ENCODE measurements at regions of chr17 and their contacts with region 1.

Region 1: GRCh38 chr17:2054512-2055291 is at the start of gene HIC1:
- DNase-seq: peak; percentile 84
- H3K4me3 ChIP-seq: peak within 1 kb of the TSS; percentile 66 to 81
- H3K27ac ChIP-seq: peak within 1 kb of the TSS; percentile 88 to 92
- H3K4me1 ChIP-seq: peaks cover 16% of the 10 kb centered on the region
- H3K27me3 ChIP-seq: no peaks in the 10 kb centered on the region
- CTCF ChIP-seq: peak; percentile 95 to 99 (median 96)
- POLR2A ChIP-seq: peak; percentile 16
- total RNA-seq, gene HIC1: 36.1 to 38.4 TPM

Region 2: GRCh38 chr17:2094891-2095535 is 40.3 kb after region 1 on chr17:
- intact Hi-C with region 1: no loop called
- DNase-seq: peak; percentile 58
- H3K4me3 ChIP-seq: no peak overlapping the region
- H3K27ac ChIP-seq: no peak overlapping the region
- H3K4me1 ChIP-seq: peaks cover 8% of the 10 kb centered on the region
- H3K27me3 ChIP-seq: no peaks in the 10 kb centered on the region
- CTCF ChIP-seq: peak; percentile 32 to 60 (median 42)
- POLR2A ChIP-seq: no peak

Region 3: DNA sequence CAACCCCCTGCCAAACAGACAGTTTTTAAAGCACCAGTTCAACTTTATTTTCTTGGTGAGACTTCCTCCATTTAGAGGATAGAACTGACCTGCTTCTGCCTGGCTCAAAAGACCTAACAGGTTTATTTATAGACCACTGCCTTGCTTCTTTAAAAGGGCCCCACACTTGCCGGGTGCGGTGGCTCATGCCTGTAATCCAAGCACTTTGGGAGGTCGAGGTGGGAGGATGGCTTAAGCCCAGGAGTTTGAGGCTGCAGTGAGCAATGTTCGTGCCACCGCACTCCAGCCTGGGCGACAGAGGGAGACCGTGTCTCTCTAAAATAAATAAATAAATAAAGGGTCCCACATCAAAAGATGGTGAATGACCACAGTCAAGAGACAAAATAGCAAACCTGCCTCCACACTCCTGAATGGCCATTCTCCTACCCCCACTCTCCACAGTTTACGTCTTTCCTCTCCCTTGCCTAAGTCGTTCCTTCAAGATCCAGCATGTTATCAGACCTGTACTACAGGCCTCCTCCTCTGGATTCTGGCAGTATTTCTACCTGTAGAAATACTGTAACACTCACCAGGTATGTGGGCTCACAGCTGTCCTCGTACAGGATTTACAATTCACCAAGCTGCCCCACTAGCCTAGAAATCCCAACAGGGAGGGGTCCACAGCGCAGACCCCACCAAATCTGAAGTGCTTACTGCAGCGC is 153.3 kb after region 1 on chr17:
- intact Hi-C with region 1: no loop called
- DNase-seq: no peak
- H3K4me3 ChIP-seq: no peak overlapping the region
- H3K27ac ChIP-seq: no peak overlapping the region
- H3K4me1 ChIP-seq: peaks cover 15% of the 10 kb centered on the region
- H3K27me3 ChIP-seq: no peaks in the 10 kb centered on the region
- CTCF ChIP-seq: no peak
- POLR2A ChIP-seq: no peak

Region 4: DNA sequence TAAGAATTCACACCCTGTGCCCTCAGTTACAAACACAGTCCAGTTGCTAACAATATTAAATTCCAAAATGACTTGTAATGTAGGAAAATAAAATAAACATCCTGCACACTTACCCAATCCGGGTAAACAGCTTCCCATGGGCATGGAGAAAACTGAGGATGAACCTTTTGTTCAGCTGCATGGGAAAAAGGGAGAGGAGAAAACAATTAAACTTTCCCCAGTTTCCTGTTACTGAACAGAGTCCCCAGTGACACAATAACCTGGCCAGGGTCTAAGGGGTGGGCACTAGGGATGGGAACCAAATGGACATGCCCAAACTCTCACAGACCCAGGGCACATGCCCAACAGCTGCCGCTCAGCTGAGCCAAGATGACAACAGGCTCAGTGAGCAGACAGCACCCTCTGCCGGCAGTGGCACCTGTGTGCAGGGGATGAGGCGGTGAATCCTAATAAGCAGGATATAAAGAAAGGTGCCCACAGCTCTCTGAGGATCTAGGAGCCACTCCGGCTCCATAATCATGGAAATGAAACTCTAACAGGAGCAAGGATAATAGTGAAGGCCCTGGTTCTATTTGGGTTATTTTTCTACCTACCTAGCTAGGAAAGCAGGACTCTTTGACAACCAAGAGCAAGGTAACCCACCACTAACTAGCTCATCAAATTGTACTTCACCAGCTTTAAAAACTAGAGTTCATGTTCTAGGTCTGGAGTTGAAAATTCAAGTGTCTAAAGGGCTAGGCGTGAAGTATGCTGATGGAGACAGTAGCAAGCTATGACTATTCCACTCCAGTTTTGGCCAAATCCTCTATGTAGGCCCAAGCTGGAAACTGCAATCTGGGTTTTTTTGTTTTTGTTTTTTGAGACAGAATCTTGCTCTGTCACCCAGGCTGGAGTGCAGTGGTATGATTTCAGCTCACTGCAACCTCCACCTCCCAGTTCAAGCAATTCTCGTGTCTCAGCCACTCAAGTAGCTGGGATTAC is 190.1 kb after region 1 on chr17:
- intact Hi-C with region 1: loop called (anchors 2 kb)
- DNase-seq: peak; percentile 87
- H3K4me3 ChIP-seq: no peak overlapping the region
- H3K27ac ChIP-seq: peak overlapping the region in 1 of 2 donors; percentile 52
- H3K4me1 ChIP-seq: peaks cover 17% of the 10 kb centered on the region
- H3K27me3 ChIP-seq: no peaks in the 10 kb centered on the region
- CTCF ChIP-seq: peak; percentile 88 to 98 (median 98)
- POLR2A ChIP-seq: no peak

Region 5: DNA sequence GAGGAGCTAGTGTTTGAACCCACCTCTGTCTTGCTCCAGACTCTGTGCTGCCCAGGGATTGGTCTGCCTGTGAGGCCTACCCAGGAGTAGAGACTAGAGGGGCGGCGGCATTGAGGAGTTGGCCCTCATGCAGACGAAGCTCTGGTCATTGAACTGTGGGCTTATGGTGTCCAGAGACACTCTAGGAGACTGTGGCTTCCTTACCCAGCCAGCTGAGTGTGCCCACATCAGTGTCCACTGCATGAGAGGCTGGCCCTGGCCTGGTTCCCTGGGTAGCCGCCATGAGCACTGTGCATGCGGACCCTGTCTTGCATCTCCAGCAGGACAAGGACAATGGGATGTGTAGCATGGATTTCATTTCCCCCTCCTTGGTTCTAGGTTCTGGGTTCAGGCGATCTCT is 296.6 kb after region 1 on chr17:
- intact Hi-C with region 1: loop called (anchors 5 kb)
- DNase-seq: no peak
- H3K4me3 ChIP-seq: no peak overlapping the region
- H3K27ac ChIP-seq: no peak overlapping the region
- H3K4me1 ChIP-seq: peaks cover 6% of the 10 kb centered on the region
- H3K27me3 ChIP-seq: no peaks in the 10 kb centered on the region
- CTCF ChIP-seq: no peak
- POLR2A ChIP-seq: no peak